Thyroid gland (tissue), 4 donors: ENCODE measurements at regions of chr18 and their contacts with region 1.

Region 1: GRCh38 chr18:47595815-47596496 is 334.5 kb downstream of the SMAD2 start:
- DNase-seq: peak; percentile 50 to 69
- H3K4me3 ChIP-seq: no peak overlapping the region
- H3K27ac ChIP-seq: no peak overlapping the region
- H3K4me1 ChIP-seq: no peaks in the 10 kb centered on the region
- H3K27me3 ChIP-seq: no peaks in the 10 kb centered on the region
- CTCF ChIP-seq: peak in 5 of 6 experiments; percentile 21 to 74 (median 53)
- POLR2A ChIP-seq: no peak

Region 2: GRCh38 chr18:47644896-47645295 is 48.9 kb after region 1 on chr18:
- intact Hi-C with region 1: no loop called
- DNase-seq: no peak
- H3K4me3 ChIP-seq: no peak overlapping the region
- H3K27ac ChIP-seq: no peak overlapping the region
- H3K4me1 ChIP-seq: no peaks in the 10 kb centered on the region
- H3K27me3 ChIP-seq: no peaks in the 10 kb centered on the region
- CTCF ChIP-seq: no peak
- POLR2A ChIP-seq: no peak

Region 3: GRCh38 chr18:47748847-47749599 is 153.1 kb after region 1 on chr18:
- intact Hi-C with region 1: loop called (anchors 5 kb)
- DNase-seq: peak; percentile 70 to 76
- H3K4me3 ChIP-seq: no peak overlapping the region
- H3K27ac ChIP-seq: no peak overlapping the region
- H3K4me1 ChIP-seq: peaks cover 0 to 3% of the 10 kb centered on the region in 2 donors
- H3K27me3 ChIP-seq: no peaks in the 10 kb centered on the region
- CTCF ChIP-seq: peak; percentile 68 to 100 (median 100)
- POLR2A ChIP-seq: no peak

Region 4: GRCh38 chr18:47815486-47816280 is 219.7 kb after region 1 on chr18:
- intact Hi-C with region 1: no loop called
- DNase-seq: no peak
- H3K4me3 ChIP-seq: no peak overlapping the region
- H3K27ac ChIP-seq: peak overlapping the region in 2 of 3 donors; percentile 43 to 79
- H3K4me1 ChIP-seq: peaks cover 21 to 23% of the 10 kb centered on the region in 2 donors
- H3K27me3 ChIP-seq: no peaks in the 10 kb centered on the region
- CTCF ChIP-seq: no peak
- POLR2A ChIP-seq: no peak